ENCODE measurements at regions of chr22 and their contacts with region 1.

Region 1: DNA sequence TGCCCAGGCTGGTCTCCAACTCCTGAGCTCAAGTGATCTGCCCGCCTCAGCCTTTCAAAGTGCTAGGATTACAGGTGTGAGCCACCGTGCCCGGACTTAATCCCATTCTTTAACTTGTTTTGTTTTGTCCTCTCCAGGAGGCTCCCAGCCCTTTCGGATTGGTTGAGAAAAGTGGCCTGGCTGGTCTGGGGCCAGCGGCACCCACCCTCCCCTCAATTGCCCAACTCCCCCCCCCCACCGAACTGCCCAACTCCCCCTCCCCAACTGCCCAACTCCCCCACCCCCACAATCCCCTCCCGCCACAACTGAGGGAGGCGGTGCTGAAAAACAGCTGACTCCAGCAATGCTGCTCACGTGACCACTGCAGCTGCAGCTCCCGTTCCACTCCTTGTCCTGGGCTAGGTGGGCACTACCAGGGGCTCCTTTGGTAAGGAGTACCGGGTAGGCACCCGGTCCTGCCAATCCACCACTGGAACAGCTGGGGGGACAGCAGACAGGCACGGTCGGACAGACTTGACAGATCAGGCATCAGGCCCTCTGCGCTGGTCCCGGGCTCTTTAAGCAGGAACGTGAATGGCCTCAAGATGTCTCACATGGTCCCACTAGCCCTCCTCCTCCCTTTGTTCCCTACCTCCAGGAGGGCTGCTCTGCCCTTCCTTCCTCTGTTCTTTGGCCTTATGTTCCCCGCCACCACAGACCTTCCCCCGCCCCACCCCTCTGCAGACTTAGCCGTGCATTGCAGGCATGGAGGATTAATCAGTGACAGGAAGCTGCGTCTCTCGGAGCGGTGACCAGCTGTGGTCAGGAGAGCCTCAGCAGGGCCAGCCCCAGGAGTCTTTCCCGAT is at the start of gene TCN2:
- DNase-seq: no peak
- ATAC-seq: peak; percentile 74
- H3K4me3 ChIP-seq: peak within 1 kb of the TSS; percentile 47 to 80
- H3K27ac ChIP-seq: peak within 1 kb of the TSS; percentile 68; the same call in 1 of the 2 replicates
- H3K4me1 ChIP-seq: peaks cover 3% of the 10 kb centered on the region
- H3K27me3 ChIP-seq: no peaks in the 10 kb centered on the region
- CTCF ChIP-seq: no peak
- total RNA-seq, gene TCN2: 2.4 TPM

Region 2: GRCh38 chr22:30196141-30196879 is 410.4 kb before region 1 on chr22:
- CTCF ChIA-PET with region 1: no interaction called
- POLR2A ChIA-PET with region 1: no interaction called
- in situ Hi-C with region 1: no loop called
- intact Hi-C with region 1: no loop called
- DNase-seq: peak; percentile 97
- ATAC-seq: peak; percentile 92
- H3K4me3 ChIP-seq: no peak overlapping the region
- H3K27ac ChIP-seq: peak overlapping the region; percentile 97
- H3K4me1 ChIP-seq: peaks cover 22% of the 10 kb centered on the region
- H3K27me3 ChIP-seq: no peaks in the 10 kb centered on the region
- CTCF ChIP-seq: no peak

Region 3: GRCh38 chr22:30453731-30454510 is 152.8 kb before region 1 on chr22:
- CTCF ChIA-PET with region 1: interaction called, 10 read pairs
- POLR2A ChIA-PET with region 1: no interaction called
- in situ Hi-C with region 1: no loop called
- intact Hi-C with region 1: no loop called
- DNase-seq: no peak
- ATAC-seq: peak; percentile 64
- H3K4me3 ChIP-seq: no peak overlapping the region
- H3K27ac ChIP-seq: no peak overlapping the region
- H3K4me1 ChIP-seq: no peaks in the 10 kb centered on the region
- H3K27me3 ChIP-seq: no peaks in the 10 kb centered on the region
- CTCF ChIP-seq: no peak

Region 4: GRCh38 chr22:30491381-30491780 is 115.3 kb before region 1 on chr22:
- CTCF ChIA-PET with region 1: interaction called, 12 read pairs
- POLR2A ChIA-PET with region 1: no interaction called
- in situ Hi-C with region 1: no loop called
- intact Hi-C with region 1: no loop called
- DNase-seq: no peak
- ATAC-seq: no peak
- H3K4me3 ChIP-seq: no peak overlapping the region
- H3K27ac ChIP-seq: no peak overlapping the region
- H3K4me1 ChIP-seq: no peaks in the 10 kb centered on the region
- H3K27me3 ChIP-seq: no peaks in the 10 kb centered on the region
- CTCF ChIP-seq: no peak